ENCODE measurements at regions of chr9 and their contacts with region 1.

Region 1: GRCh38 chr9:27701587-27701986 is 128.3 kb upstream of the C9orf72 start:
- DNase-seq: peak; percentile 6
- H3K4me3 Mint-ChIP-seq: peak overlapping the region; percentile 20
- H3K27ac Mint-ChIP-seq: no peak overlapping the region
- H3K4me1 Mint-ChIP-seq: peaks cover 14% of the 10 kb centered on the region
- H3K27me3 Mint-ChIP-seq: no peaks in the 10 kb centered on the region
- CTCF ChIP-seq: no peak

Region 2: GRCh38 chr9:27489087-27489876 is 212.3 kb before region 1 on chr9:
- CTCF ChIA-PET with region 1: no interaction called
- intact Hi-C with region 1: no loop called
- DNase-seq: no peak
- H3K4me3 Mint-ChIP-seq: no peak overlapping the region
- H3K27ac Mint-ChIP-seq: no peak overlapping the region
- H3K4me1 Mint-ChIP-seq: peaks cover 9% of the 10 kb centered on the region
- H3K27me3 Mint-ChIP-seq: no peaks in the 10 kb centered on the region
- CTCF ChIP-seq: no peak

Region 3: DNA sequence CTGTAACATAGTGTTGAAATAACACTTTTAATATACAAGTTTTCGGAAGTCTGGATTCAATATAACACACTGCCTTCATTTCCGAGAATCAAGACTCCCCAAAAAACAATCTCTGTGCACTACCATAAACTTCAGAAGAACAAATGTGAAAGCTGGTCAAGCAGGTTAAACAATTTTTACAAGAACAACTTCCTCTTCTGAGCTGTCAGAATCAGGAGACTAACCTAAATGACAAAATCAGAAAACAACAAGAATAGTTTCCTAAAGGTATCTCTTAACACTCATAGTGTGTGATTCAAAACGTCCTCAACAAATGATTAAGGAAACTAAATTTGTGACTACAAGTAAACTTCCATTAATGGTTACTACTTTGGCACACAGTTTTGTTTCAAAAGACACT is 139.9 kb before region 1 on chr9:
- CTCF ChIA-PET with region 1: interaction called, 3 read pairs
- intact Hi-C with region 1: loop called (anchors 10 kb)
- DNase-seq: no peak
- H3K4me3 Mint-ChIP-seq: no peak overlapping the region
- H3K27ac Mint-ChIP-seq: peak overlapping the region; percentile 49
- H3K4me1 Mint-ChIP-seq: peaks cover 9% of the 10 kb centered on the region
- H3K27me3 Mint-ChIP-seq: no peaks in the 10 kb centered on the region
- CTCF ChIP-seq: no peak

Region 4: GRCh38 chr9:27626244-27627187 is 75.1 kb before region 1 on chr9:
- CTCF ChIA-PET with region 1: no interaction called
- intact Hi-C with region 1: loop called (anchors 10 kb)
- DNase-seq: peak; percentile 47
- H3K4me3 Mint-ChIP-seq: peak overlapping the region; percentile 55
- H3K27ac Mint-ChIP-seq: peak overlapping the region; percentile 60
- H3K4me1 Mint-ChIP-seq: peaks cover 70% of the 10 kb centered on the region
- H3K27me3 Mint-ChIP-seq: no peaks in the 10 kb centered on the region
- CTCF ChIP-seq: no peak

Measured in Calu3 (cell line).